ENCODE measurements at regions of chrX and their contacts with region 1.

Region 1: GRCh38 chrX:10119399-10119990 is 37.3 kb upstream of the CLCN4 start:
- DNase-seq: peak; percentile 55
- H3K4me3 ChIP-seq: no peak overlapping the region
- CTCF ChIP-seq: peak; percentile 48

Region 2: DNA sequence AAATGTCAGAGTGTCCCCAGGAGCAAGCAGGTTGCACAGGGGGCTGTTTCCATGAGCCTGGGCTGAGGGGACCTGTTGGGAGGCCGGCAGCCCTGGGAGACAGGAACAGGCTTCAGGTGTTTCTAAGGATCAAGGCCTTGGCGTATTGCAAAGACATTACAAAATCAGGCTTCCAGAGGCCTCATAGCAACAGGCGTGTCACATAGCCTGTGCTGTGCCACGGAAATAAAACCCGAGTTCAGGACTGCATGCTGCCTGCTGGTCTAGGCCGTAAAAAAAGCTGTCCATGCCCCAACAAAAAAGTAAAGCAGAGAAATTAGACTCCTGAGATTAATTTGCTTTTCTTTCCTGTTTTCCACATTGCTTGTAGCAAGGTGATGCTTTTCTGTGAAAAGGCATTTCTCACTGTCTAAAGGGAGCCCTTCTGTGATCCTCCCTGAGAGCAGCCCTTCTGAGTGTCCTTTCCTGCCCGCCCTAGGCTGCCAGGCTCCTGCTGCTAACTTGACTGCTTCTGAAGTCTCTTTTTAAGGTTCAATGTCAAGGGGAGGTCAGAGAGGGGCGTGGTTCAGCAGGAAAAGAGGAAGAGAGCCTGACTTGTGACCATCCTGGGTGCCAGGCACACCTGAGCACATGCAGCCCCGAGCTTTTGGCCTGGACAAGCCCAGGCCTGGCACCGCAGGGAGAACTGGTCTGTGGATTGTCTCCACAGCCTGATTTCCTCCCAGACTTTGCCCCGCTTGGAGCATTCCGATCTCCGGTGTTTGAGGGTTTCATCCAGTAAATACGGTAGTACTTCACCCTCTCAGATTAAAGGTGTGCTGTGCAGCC is 311.9 kb before region 1 on chrX:
- CTCF ChIA-PET with region 1: no interaction called
- POLR2A ChIA-PET with region 1: no interaction called
- DNase-seq: no peak
- H3K4me3 ChIP-seq: no peak overlapping the region
- CTCF ChIP-seq: no peak

Region 3: DNA sequence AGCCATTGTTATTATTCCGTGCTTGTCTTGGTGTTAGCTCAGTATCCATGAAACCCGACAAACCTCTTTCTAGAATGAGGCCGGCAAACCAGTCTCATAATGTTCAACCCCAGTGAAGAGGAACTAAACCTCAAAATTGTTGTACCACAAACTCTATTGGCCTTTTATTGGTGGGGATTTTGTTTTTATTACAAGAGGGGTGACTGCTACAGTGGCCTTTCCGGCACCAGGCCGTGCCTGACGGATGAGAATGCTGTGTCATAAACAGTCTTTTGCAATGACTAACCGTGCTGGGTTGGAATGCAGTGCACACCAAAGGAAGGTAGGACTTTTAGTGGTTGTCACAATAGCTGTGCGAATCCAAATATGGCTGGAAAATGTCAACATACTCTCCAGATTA is 272.4 kb before region 1 on chrX:
- CTCF ChIA-PET with region 1: no interaction called
- POLR2A ChIA-PET with region 1: no interaction called
- DNase-seq: no peak
- H3K4me3 ChIP-seq: no peak overlapping the region
- CTCF ChIP-seq: no peak

Region 4: DNA sequence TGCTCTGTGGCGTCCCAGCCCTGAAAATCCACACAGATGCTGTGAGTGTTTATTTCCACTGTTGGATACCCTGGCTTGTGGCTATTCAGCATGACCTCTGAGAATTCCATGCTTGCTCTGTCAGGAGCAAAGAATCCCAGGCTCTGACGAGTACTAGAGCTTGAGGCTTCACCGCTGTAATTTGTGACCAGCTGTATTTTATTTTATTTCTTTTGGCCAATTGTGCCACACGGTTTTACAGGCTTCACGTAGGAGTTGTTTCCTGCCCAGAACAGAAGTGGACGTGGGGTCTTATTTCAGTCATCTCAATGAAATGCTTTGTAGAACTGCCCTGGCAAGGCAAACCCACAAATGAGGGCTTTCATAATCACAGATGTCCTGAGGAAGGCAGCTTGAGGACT is 221.7 kb before region 1 on chrX:
- CTCF ChIA-PET with region 1: interaction called, 13 read pairs
- POLR2A ChIA-PET with region 1: no interaction called
- DNase-seq: peak; percentile 88
- H3K4me3 ChIP-seq: no peak overlapping the region
- CTCF ChIP-seq: no peak

Region 5: DNA sequence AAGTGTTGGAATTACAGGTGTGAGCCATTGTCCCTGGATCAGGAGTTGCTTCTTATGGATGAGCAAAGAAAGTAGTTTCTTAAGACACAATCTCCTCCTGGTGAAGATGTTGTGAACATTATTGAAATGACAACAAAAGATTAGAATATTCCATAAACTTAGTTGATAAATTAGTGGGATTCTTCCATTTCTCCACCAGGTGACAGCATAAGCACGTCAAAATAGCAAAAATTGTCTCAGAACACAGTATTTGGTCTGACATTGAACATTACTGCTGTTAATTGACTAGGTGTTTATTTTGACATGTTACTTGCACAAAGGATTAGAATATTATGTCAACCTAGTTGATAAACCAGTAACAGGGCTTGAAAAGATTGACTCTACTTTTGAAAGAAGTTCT is 130.7 kb before region 1 on chrX:
- CTCF ChIA-PET with region 1: interaction called, 281 read pairs
- POLR2A ChIA-PET with region 1: no interaction called
- DNase-seq: no peak
- H3K4me3 ChIP-seq: no peak overlapping the region
- CTCF ChIP-seq: peak; percentile 15

Region 6: GRCh38 chrX:10007621-10008020 is 111.9 kb before region 1 on chrX:
- CTCF ChIA-PET with region 1: interaction called, 18 read pairs
- POLR2A ChIA-PET with region 1: interaction called, 3 read pairs
- DNase-seq: no peak
- H3K4me3 ChIP-seq: no peak overlapping the region
- CTCF ChIP-seq: no peak

Region 7: DNA sequence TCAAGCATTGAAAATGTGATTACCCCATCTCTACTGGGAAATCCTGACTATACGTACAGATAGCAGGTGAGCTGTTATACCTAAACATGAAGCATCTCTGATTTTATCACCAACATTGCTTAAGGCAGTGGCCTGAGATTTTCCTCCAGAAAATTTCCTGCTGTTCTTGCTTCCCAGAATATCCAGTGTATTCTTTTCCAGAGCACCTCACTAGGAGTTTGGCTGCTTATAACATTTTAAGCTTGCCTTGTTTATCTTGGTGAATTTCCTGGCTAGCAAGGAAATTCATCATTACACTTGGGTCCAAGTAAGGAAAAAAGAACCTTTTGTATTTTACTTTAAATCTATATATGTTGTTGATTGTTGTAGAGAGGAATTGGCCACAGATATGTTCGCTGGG is 35.7 kb before region 1 on chrX:
- CTCF ChIA-PET with region 1: interaction called, 16 read pairs
- POLR2A ChIA-PET with region 1: no interaction called
- DNase-seq: no peak
- H3K4me3 ChIP-seq: no peak overlapping the region
- CTCF ChIP-seq: no peak

Region 8: GRCh38 chrX:10103023-10103422 is 16.5 kb before region 1 on chrX:
- CTCF ChIA-PET with region 1: interaction called, 60 read pairs
- POLR2A ChIA-PET with region 1: no interaction called
- DNase-seq: peak; percentile 79
- H3K4me3 ChIP-seq: no peak overlapping the region
- CTCF ChIP-seq: no peak

Region 9: GRCh38 chrX:10146346-10146745 is 26.9 kb after region 1 on chrX:
- CTCF ChIA-PET with region 1: interaction called, 11 read pairs
- POLR2A ChIA-PET with region 1: no interaction called
- DNase-seq: no peak
- H3K4me3 ChIP-seq: no peak overlapping the region
- CTCF ChIP-seq: no peak

Region 10: GRCh38 chrX:10379878-10380277 is 260.4 kb after region 1 on chrX:
- CTCF ChIA-PET with region 1: no interaction called
- POLR2A ChIA-PET with region 1: no interaction called
- DNase-seq: no peak
- H3K4me3 ChIP-seq: no peak overlapping the region
- CTCF ChIP-seq: no peak